ENCODE measurements at regions of chr2 and their contacts with region 1.

Region 1: DNA sequence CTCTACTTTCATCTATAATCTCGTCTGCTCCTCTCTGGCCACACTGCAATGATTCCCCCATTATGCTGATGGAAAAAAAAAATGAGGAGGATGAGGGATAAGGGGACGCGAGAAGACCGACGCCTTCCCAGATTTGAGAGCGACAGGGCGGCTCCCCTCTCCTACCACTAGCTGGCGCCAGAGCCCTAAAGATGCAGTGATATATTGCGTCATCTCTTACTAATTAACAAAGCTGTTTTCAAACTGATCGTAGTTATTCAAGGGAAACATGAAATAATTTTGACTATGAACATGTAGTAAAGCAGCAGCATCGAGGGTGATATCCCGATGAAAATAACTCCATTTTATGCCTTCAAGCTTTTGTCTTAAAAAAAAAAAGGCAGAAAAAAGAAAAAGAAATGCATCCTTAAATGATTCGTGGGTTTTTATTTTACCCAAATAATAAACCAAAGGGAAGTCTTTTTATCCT is 48.0 kb upstream of the HNRNPA3 start:
- DNase-seq: peak; percentile 82
- ATAC-seq: peak; percentile 84 to 91

Region 2: DNA sequence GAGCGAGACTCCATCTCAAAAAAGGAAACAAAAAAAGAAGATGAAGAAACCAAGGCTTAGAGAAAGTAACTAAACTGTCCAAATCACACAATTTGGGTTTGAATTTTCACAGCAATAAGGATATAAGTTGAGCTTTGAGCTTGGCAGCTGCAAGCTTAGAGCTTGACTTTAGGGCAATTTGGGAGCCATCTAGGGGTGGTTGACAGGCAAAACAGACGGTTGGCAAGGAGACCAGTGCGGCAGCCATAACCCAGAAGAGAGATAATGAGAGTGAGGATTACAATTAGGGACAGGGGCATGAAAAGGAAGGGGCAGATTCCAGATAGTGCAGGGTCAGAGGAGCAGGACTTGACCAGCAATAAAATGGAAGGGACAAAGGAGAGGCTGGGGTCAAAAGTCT is 334.3 kb before region 1 on chr2:
- intact Hi-C with region 1: no loop called
- DNase-seq: no peak
- ATAC-seq: no peak

Region 3: DNA sequence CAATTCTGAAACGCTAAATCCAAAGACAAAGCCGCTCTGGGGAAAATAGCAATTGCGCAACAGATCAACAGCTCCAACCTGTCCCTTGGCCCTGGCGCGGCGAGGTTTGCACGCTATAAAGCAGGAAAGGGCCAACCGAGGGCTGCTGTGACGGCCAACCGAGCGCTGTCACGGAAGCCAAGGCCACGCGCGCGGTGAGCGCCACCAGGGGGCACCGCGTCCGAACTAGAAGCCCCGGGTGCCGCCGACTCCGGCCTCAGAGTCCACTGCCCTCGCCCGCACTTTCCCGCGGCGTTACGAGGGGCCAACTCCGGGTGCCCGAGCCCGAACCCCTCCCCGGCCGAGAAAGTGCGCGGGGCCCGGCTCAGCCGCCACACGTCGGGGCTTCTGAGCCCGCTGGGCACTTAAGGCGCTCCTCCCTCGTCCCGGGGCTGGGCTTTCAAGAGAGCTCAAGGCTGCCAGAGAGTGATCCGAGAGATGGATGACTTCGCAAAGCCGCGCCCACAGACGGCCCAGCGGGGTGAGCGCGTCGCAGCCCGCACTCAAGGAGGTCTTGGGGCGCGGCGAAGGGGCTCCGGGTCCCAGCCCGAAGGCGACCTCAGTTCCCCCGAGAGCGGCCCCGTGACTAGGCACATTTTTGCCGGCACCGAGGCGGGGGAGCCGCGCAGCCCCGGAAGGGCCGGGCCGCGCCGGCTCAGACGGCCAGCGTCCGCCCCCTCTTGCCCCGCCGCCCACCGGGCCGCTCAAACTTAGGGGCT is 99.0 kb after region 1 on chr2:
- intact Hi-C with region 1: loop called in 1 of 2 experiments (anchors 5 kb)
- DNase-seq: peak; percentile 98
- ATAC-seq: peak; percentile 74 to 75

Region 4: DNA sequence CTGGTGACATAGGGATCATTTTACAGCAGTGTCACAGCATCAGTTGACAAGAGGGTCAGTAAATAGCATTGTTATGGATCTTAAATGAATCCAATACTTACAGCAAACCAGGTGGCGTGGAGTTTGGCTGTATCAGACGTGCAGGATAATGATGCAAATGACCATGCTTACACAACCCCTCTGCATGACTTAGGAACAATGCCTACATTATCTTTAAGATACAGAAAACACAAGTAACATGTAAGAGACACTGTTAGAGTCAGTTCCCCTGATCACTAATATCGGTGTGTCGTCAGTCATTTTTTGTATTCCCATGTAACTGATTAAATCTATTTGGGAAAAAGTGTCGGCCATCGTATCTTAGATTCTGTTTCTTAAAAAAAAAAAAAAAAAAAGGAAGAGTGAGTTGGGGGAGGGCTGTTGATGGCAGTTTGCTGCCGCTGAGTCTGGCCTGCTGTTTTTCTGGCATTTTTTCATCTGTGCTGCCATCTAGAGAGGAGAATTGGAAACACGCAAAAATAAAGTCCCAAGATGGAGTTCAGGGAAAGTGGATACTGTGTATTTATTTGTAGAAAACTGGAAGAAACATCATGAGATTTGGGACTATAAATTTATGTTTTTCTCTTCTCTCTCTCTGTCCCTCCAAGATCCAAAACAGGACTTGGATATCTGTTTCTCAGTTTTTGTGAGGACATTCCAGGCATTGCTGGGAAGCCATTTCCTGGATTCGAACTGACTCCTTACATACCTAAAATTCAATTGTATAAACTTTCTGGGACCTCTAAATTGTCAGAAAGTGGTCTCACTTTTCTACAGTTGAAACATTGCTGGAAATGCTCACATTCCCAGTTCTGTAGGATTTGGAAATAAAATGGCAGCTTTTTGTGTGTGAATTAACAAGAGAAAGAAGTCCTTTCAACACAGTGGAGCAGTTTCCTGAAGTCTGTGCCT is 167.7 kb after region 1 on chr2:
- intact Hi-C with region 1: loop called (anchors 1 to 2 kb)
- DNase-seq: peak; percentile 41
- ATAC-seq: peak; percentile 81 to 88

Region 5: DNA sequence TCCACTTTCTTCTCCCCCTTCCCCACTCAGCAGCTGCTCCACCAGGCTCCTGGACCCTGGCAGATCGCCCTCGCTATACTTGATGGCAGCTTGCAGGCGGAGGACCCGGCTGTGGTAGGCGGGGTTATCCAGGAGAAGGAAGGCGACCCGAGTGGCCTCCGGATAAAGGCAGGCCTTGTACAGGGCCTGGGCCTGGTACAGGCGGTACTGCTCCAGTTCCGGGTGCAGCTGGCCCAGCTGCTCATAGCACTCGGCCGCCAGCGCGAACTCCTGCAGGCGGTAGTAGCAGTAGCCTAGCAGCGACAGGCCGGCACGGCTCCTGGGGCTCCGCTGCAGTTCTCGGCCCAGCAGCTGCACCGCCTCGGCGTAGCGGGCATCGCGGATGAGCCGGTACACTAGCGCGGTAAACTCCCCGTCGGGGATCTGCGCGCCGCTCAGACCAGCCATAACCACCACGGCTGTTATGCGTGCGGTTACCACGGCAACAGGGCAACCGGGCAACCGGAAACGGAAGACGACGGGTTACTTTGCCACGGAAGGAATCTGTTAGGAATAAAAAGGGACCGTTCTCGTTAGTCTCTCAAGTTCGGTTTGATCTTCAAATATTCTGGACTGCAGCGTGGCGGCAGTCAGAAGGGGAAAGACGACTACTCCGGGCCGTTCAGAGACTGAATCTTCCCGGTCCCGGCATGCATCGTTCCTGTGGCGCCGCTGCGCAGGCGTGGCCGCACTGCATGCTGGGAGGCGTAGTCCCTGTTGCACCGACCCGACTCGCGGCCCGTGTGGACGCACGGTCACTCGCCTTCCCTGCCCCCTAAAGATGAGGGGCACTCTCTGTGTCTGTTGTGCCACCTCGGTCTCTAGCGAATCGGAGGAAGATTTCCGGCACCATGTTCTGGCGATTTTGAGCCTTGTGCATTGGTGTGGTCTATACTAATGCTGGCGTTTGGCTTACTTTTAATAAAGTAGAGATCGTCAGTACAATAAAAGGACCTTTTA is 453.9 kb after region 1 on chr2:
- intact Hi-C with region 1: loop called in 1 of 2 experiments (anchors 10 kb)
- DNase-seq: peak; percentile 95
- ATAC-seq: peak; percentile 98 to 99

Region 6: GRCh38 chr2:177763532-177764265 is 599.1 kb after region 1 on chr2:
- intact Hi-C with region 1: loop called in 1 of 2 experiments (anchors 2 kb)
- DNase-seq: peak; percentile 84
- ATAC-seq: peak; percentile 85 to 90